Activated CD4-positive, alpha-beta T cell treated with anti-CD3 and anti-CD28 coated beads, Interleukin-2, amount 10 ng/mL, durations not matched to agents 24 days and 14 days (primary cell): ENCODE measurements at regions of chr3 and their contacts with region 1.

Region 1: DNA sequence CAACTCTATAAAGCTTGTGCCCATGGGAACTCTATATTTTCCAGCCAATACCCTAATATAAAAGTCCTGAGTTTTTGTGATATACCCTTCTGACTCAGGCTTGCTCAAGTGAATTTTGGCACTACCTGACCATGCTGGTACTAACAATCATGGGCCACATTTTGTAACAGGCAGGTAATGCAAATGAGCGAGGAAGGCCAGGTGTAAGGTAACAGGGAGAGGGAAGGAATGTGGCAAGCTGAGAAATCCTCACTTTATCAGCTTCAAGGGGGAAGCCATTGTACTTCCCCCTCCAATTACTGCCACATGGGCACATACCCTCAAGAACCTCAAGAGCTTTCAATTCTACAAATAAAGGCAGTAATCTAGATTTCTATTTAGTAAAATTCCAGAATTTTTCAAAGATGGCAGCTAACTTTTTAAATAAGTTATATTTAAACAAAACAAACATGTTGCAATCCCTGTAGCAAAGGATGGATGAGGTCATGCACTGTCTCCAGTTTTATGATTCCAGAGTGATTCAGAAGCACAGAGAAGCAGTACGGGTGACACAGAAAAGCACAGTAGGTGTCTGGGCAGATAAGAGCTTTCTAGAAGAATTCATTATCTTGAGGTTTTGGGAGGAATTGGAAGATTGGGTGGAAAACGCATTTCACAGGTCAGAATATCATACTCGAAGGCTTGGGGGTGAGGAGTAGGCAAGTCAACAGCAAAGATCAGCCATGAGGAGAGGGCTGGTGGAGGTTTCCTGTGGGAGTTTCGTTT is 87.6 kb downstream of the FOXP1 start:
- DNase-seq: peak; percentile 77
- H3K4me3 Mint-ChIP-seq: peak overlapping the region; percentile 71
- H3K27ac Mint-ChIP-seq: peak overlapping the region; percentile 81
- H3K4me1 Mint-ChIP-seq: peaks cover 50% of the 10 kb centered on the region
- H3K27me3 Mint-ChIP-seq: peaks cover 4% of the 10 kb centered on the region

Region 2: GRCh38 chr3:71185733-71186455 is 310.0 kb before region 1 on chr3:
- intact Hi-C with region 1: loop called (anchors 5 kb)
- DNase-seq: no peak
- H3K4me3 Mint-ChIP-seq: no peak overlapping the region
- H3K27ac Mint-ChIP-seq: no peak overlapping the region
- H3K4me1 Mint-ChIP-seq: peaks cover 26% of the 10 kb centered on the region
- H3K27me3 Mint-ChIP-seq: no peaks in the 10 kb centered on the region

Region 3: DNA sequence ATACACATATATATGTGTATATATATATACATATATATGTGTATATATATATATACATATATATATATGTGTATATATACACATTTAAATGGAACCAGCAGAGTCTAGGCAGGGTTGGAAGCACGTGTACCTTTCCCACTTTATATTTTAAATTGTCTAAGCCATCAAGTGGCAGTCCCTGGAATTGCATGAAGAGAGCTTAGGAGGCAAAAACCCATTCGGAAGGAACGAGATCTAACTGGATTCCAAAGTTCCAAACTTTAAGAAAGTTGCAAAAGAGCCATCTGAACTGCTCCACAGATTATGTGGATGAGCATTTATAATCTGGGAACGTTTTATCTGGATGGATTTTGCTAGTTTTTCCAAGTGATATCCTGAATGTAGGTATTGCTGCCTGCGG is 98.8 kb before region 1 on chr3:
- intact Hi-C with region 1: loop called (anchors 10 kb)
- DNase-seq: no peak
- H3K4me3 Mint-ChIP-seq: no peak overlapping the region
- H3K27ac Mint-ChIP-seq: no peak overlapping the region
- H3K4me1 Mint-ChIP-seq: peaks cover 22% of the 10 kb centered on the region
- H3K27me3 Mint-ChIP-seq: peaks cover 35% of the 10 kb centered on the region

Region 4: DNA sequence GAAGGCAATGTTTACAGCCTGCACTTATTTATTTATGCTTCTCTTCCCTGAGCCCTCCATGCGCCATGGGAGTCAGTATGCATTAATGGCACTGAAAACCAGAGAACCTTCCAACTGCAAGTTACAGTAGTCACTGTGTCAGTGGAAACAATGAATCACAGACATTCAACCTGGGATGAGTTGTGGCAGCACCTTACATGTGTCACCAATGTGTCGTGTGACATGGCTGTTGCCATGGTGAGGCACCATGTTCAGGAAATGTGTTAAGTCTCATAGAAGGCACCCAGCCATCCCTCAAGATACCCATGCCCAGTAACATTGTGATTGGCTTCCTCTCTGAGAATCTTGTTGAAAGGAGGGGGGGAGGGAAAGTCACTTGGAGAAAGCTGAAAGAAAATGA is 17.3 kb before region 1 on chr3:
- intact Hi-C with region 1: loop called (anchors 2 kb)
- DNase-seq: peak; percentile 78
- H3K4me3 Mint-ChIP-seq: no peak overlapping the region
- H3K27ac Mint-ChIP-seq: peak overlapping the region; percentile 82
- H3K4me1 Mint-ChIP-seq: peaks cover 22% of the 10 kb centered on the region
- H3K27me3 Mint-ChIP-seq: no peaks in the 10 kb centered on the region

Region 5: DNA sequence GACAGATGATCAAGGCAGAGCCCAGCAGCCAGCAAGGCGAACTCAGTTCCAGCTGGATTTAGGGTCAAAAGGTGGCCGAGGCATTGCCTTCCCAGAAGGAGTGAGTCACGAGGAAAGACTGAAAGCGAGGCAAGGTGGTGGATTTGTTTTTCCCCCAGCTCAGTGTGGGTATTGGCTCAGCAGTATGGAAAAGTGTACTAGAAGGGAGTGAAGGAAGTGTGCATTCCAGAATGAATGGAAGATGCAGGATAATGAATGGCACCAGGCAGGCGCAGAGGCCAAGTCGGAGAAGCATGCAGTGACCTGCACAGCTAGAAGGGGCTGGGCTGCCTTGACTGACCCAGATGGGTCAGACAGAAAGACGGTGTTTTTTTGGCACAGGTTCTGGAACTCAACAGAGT is 41.3 kb after region 1 on chr3:
- intact Hi-C with region 1: no loop called
- DNase-seq: no peak
- H3K4me3 Mint-ChIP-seq: no peak overlapping the region
- H3K27ac Mint-ChIP-seq: no peak overlapping the region
- H3K4me1 Mint-ChIP-seq: peaks cover 5% of the 10 kb centered on the region
- H3K27me3 Mint-ChIP-seq: peaks cover 11% of the 10 kb centered on the region